GM12878 (cell line): ENCODE measurements at regions of chr20 and their contacts with region 1.

Region 1: GRCh38 chr20:23068283-23068682 is 17.8 kb downstream of the CD93 start:
- DNase-seq: no peak
- ATAC-seq: peak; percentile 63
- H3K4me3 ChIP-seq: no peak overlapping the region
- H3K27ac ChIP-seq: no peak overlapping the region
- H3K4me1 ChIP-seq: no peaks in the 10 kb centered on the region
- H3K27me3 ChIP-seq: no peaks in the 10 kb centered on the region
- CTCF ChIP-seq: no peak
- EP300 ChIP-seq: no peak
- POLR2A ChIP-seq: no peak
- RAD21 ChIP-seq: no peak

Region 2: DNA sequence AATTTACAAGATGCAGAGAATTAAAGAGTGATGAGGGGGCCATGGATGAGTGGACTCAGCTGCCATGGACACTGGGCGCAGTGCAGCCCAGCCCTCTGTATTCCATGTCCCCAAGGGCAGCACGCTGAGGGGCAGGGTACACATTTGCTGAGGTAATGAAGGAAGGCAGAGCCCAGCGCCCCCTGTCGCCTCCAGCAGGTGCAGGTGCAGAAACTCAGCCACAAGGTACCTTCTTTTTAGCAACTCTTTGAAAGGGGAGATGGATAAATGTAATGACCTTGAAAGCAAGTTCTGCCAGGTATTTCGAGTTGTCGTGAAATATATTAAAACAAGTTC is 10.7 kb after region 1 on chr20:
- CTCF ChIA-PET with region 1: interaction called, 19 read pairs
- POLR2A ChIA-PET with region 1: no interaction called
- RAD21 ChIA-PET with region 1: interaction called, 4 read pairs
- SMC1A ChIA-PET with region 1: interaction called, 9 read pairs
- in situ Hi-C with region 1: no loop called
- intact Hi-C with region 1: no loop called
- DNase-seq: no peak
- ATAC-seq: no peak
- H3K4me3 ChIP-seq: no peak overlapping the region
- H3K27ac ChIP-seq: no peak overlapping the region
- H3K4me1 ChIP-seq: no peaks in the 10 kb centered on the region
- H3K27me3 ChIP-seq: peaks cover 0 to 3% of the 10 kb centered on the region in 2 experiments; a peak in 1 of 4 replicates
- CTCF ChIP-seq: peak; percentile 25 to 50 (median 47); a peak in 3 of 6 replicates
- EP300 ChIP-seq: no peak
- POLR2A ChIP-seq: no peak
- RAD21 ChIP-seq: peak; percentile 31